ENCODE measurements at regions of chr7 and their contacts with region 1.

Region 1: GRCh38 chr7:8436965-8437364 is 3.6 kb downstream of the NXPH1 start:
- DNase-seq: peak; percentile 4
- ATAC-seq: peak; percentile 96
- H3K4me3 ChIP-seq: no peak overlapping the region
- H3K27ac ChIP-seq: no peak overlapping the region
- H3K4me1 ChIP-seq: no peaks in the 10 kb centered on the region
- H3K27me3 ChIP-seq: peaks cover 19 to 28% of the 10 kb centered on the region in 2 experiments
- CTCF ChIP-seq: peak; percentile 81 to 94 (median 89)
- EP300 ChIP-seq: no peak
- POLR2A ChIP-seq: no peak
- RAD21 ChIP-seq: peak; percentile 70

Region 2: GRCh38 chr7:8411103-8411502 is 25.9 kb before region 1 on chr7:
- CTCF ChIA-PET with region 1: no interaction called
- POLR2A ChIA-PET with region 1: no interaction called
- RAD21 ChIA-PET with region 1: no interaction called
- SMC1A ChIA-PET with region 1: no interaction called
- in situ Hi-C with region 1: no loop called
- intact Hi-C with region 1: no loop called
- DNase-seq: no peak
- ATAC-seq: no peak
- H3K4me3 ChIP-seq: no peak overlapping the region
- H3K27ac ChIP-seq: no peak overlapping the region
- H3K4me1 ChIP-seq: no peaks in the 10 kb centered on the region
- H3K27me3 ChIP-seq: no peaks in the 10 kb centered on the region; a peak in 2 of 4 replicates
- CTCF ChIP-seq: no peak
- EP300 ChIP-seq: no peak
- POLR2A ChIP-seq: no peak
- RAD21 ChIP-seq: no peak

Region 3: DNA sequence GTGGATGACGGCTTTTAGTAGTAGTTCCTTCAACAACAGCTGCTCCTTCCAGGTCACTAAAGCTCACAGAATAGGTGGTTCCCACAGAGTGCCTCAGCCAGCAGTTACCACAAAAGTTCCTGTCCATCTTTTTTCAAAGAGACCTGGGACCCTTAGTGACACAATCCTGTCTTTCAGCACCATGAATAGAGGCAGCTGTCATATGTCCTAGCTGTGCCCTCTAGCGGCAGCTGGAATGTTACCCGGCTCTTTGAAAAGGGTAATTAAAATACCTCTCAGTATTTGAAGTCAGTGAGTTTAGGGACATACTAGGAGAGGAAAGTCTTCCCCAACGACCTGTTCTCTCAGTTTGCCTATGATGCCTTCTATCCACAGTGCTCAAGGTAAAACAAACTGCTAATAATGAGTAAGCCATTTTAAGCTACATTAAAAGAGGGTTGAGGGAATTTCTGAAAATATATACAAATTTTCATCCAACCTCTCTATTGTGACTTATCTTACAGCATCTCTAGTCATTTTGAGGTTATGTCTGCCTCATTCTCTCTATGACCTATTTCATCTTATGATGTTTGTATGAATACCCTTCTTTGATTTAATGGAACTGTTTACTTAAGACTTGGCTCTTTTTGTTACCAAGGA is 287.2 kb after region 1 on chr7:
- CTCF ChIA-PET with region 1: interaction called, 38 read pairs
- POLR2A ChIA-PET with region 1: no interaction called
- RAD21 ChIA-PET with region 1: interaction called, 17 read pairs
- SMC1A ChIA-PET with region 1: interaction called, 8 read pairs
- in situ Hi-C with region 1: no loop called
- intact Hi-C with region 1: loop called (anchors 1 kb)
- DNase-seq: no peak
- ATAC-seq: peak; percentile 92
- H3K4me3 ChIP-seq: no peak overlapping the region
- H3K27ac ChIP-seq: no peak overlapping the region
- H3K4me1 ChIP-seq: no peaks in the 10 kb centered on the region
- H3K27me3 ChIP-seq: no peaks in the 10 kb centered on the region
- CTCF ChIP-seq: peak; percentile 80 to 87 (median 80)
- EP300 ChIP-seq: no peak
- POLR2A ChIP-seq: no peak
- RAD21 ChIP-seq: peak; percentile 65

Region 4: DNA sequence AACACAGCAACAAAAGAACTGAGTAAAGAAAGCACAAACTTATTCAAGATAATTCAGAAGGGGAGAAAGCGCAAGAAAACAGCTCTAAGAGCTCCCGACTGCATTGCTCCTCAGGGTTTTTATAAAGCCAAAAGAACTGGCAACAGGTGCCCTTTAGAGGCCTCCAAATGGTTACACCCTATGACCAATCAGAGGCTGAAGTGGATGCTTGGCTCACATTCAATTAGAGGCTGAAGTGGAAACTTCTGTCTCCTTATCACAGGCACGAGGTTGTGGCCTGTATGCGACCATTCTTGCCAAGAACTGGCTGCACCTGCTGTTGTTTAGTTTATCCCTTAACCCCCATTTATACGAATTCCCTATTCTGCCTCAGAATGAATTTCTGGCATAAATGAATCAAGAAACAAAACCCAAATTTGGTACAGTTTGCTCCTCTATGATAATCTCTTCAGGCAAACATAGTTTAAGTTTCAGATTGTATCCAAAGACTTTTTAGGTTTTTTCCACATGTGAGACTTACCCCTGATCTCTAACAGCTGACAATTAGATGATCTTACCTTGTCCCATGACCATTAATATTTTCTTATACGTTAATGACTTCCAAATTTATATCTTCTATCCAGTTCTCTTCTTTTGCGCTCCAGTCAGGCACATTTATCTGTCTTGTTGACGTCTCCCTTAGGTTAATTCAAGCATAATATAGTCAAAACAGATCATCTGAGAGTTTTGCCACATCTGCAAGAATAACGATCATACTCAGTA is 501.3 kb after region 1 on chr7:
- CTCF ChIA-PET with region 1: no interaction called
- POLR2A ChIA-PET with region 1: no interaction called
- RAD21 ChIA-PET with region 1: no interaction called
- SMC1A ChIA-PET with region 1: no interaction called
- in situ Hi-C with region 1: no loop called
- intact Hi-C with region 1: no loop called
- DNase-seq: no peak
- ATAC-seq: no peak
- H3K4me3 ChIP-seq: no peak overlapping the region
- H3K27ac ChIP-seq: no peak overlapping the region
- H3K4me1 ChIP-seq: no peaks in the 10 kb centered on the region
- H3K27me3 ChIP-seq: no peaks in the 10 kb centered on the region
- CTCF ChIP-seq: no peak
- EP300 ChIP-seq: no peak
- POLR2A ChIP-seq: no peak
- RAD21 ChIP-seq: no peak

Region 5: GRCh38 chr7:9091282-9091681 is 654.3 kb after region 1 on chr7:
- CTCF ChIA-PET with region 1: no interaction called
- POLR2A ChIA-PET with region 1: no interaction called
- RAD21 ChIA-PET with region 1: no interaction called
- SMC1A ChIA-PET with region 1: no interaction called
- in situ Hi-C with region 1: no loop called
- intact Hi-C with region 1: loop called (anchors 5 kb)
- DNase-seq: no peak
- ATAC-seq: peak; percentile 75
- H3K4me3 ChIP-seq: no peak overlapping the region
- H3K27ac ChIP-seq: no peak overlapping the region
- H3K4me1 ChIP-seq: no peaks in the 10 kb centered on the region
- H3K27me3 ChIP-seq: no peaks in the 10 kb centered on the region
- CTCF ChIP-seq: peak; percentile 7 to 30 (median 27); a peak in 2 of 6 replicates
- EP300 ChIP-seq: no peak
- POLR2A ChIP-seq: no peak
- RAD21 ChIP-seq: peak; percentile 68; the same call in 1 of the 2 replicates